MCF 10A (cell line): ENCODE measurements at regions of chr14 and their contacts with region 1.

Region 1: GRCh38 chr14:20247646-20248246 is 8.7 kb downstream of the OR11H4 start:
- DNase-seq: peak; percentile 55
- H3K4me3 Mint-ChIP-seq: no peak overlapping the region
- H3K27ac Mint-ChIP-seq: no peak overlapping the region
- H3K4me1 Mint-ChIP-seq: no peaks in the 10 kb centered on the region
- H3K27me3 Mint-ChIP-seq: no peaks in the 10 kb centered on the region
- CTCF ChIP-seq: peak; percentile 30

Region 2: DNA sequence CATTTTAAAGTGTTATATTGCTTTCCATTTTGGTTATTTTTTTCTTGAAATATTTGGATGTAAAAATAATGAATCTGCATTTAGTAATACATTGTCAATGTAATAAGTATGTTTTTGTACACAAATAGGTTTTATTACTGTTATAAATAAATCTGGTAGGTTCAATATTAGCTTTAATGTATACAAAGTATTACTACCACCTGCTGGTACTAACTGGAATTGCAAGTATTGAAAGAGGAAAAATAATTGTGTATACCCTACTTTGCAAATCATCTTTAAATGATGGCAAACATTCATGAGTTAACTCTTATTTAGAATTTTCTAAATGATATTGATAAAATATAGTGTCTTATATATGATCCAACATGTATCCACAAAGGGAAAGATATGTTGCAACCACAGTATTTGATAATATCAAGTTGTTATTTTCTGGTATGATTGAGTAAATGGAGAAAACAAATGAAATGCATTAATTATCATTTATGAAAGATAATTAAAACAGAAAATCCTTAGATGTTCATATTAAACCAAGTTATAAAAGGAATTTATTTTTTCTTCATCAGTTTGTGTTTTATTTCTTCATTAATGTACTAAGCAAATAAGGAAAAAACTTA is 369.6 kb before region 1 on chr14:
- CTCF ChIA-PET with region 1: interaction called, 3 read pairs
- POLR2A ChIA-PET with region 1: no interaction called
- intact Hi-C with region 1: loop called (anchors 10 kb)
- DNase-seq: peak; percentile 49
- H3K4me3 Mint-ChIP-seq: no peak overlapping the region
- H3K27ac Mint-ChIP-seq: no peak overlapping the region
- H3K4me1 Mint-ChIP-seq: no peaks in the 10 kb centered on the region
- H3K27me3 Mint-ChIP-seq: peaks cover 41% of the 10 kb centered on the region
- CTCF ChIP-seq: peak; percentile 57